Activated CD8-positive, alpha-beta T cell treated with anti-CD3 and anti-CD28 coated beads, Interleukin-2, amount 10 ng/mL, durations not matched to agents 7 days and 5 days (primary cell): ENCODE measurements at regions of chr3 and their contacts with region 1.

Region 1: GRCh38 chr3:88058591-88059368 is at the starts of genes CGGBP1 and ZNF654:
- DNase-seq: peak; percentile 99
- ATAC-seq: peak; percentile 96
- H3K4me3 Mint-ChIP-seq: peak within 1 kb of the TSS; percentile 92
- H3K27ac Mint-ChIP-seq: peak within 1 kb of the TSS; percentile 96
- H3K4me1 Mint-ChIP-seq: peaks cover 46% of the 10 kb centered on the region
- H3K27me3 Mint-ChIP-seq: no peaks in the 10 kb centered on the region
- total RNA-seq, gene CGGBP1: 85.6 to 87.6 TPM
- total RNA-seq, gene ZNF654: 21.3 to 22.3 TPM

Region 2: DNA sequence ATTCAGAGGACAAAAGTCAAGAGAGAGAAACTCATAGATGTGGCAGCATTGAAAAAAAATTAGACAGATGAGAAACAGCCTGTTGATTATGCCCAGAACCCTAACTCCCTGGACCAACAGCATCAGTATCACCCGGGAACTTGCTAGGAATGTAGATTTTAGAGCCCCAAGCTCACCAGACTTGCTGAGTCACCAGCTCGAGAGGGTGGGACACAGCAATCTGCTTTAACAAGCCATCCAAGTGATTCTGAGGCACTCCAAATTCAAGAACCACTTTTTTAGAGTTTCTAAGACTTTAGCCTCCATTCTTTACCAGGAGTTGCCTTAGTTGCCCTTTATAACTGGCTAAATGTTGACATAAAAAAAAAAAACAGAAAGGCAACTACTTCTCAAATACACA is 70.8 kb before region 1 on chr3:
- CTCF ChIA-PET with region 1: no interaction called
- POLR2A ChIA-PET with region 1: no interaction called
- DNase-seq: no peak
- ATAC-seq: no peak
- H3K4me3 Mint-ChIP-seq: no peak overlapping the region
- H3K27ac Mint-ChIP-seq: no peak overlapping the region
- H3K4me1 Mint-ChIP-seq: no peaks in the 10 kb centered on the region
- H3K27me3 Mint-ChIP-seq: peaks cover 5% of the 10 kb centered on the region

Region 3: DNA sequence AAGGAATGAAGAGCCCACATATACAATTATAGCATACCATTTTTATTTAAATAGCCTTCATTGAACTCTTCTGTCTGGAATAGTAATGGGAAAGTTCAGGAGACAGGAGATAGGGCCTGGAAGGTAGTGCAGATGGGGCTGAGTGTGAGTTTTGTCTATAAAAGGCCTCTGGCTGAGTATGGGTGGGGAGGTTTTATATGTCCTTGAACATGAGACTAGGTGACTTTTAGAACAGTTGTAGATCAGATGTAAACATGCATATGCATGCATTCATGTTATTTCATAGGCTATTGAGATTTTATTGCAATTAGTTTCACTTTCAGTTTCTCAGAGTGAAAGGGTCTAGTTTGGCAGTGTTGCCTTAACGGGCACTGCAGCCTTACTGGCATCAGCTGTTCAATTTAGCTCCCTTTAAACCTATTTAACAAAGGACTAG is 27.1 kb before region 1 on chr3:
- CTCF ChIA-PET with region 1: interaction called, 9 read pairs
- POLR2A ChIA-PET with region 1: interaction called, 28 read pairs
- DNase-seq: peak; percentile 46
- ATAC-seq: peak; percentile 93
- H3K4me3 Mint-ChIP-seq: peak overlapping the region; percentile 80
- H3K27ac Mint-ChIP-seq: peak overlapping the region; percentile 90
- H3K4me1 Mint-ChIP-seq: peaks cover 26% of the 10 kb centered on the region
- H3K27me3 Mint-ChIP-seq: no peaks in the 10 kb centered on the region

Region 4: GRCh38 chr3:88149509-88150362 is 91.0 kb after region 1 on chr3 and contains the start of gene C3orf38:
- CTCF ChIA-PET with region 1: interaction called, 5 read pairs
- POLR2A ChIA-PET with region 1: interaction called, 56 read pairs
- DNase-seq: peak; percentile 87
- ATAC-seq: peak; percentile 95
- H3K4me3 Mint-ChIP-seq: peak within 1 kb of the TSS; percentile 90
- H3K27ac Mint-ChIP-seq: peak within 1 kb of the TSS; percentile 98
- H3K4me1 Mint-ChIP-seq: peaks cover 33% of the 10 kb centered on the region
- H3K27me3 Mint-ChIP-seq: no peaks in the 10 kb centered on the region
- total RNA-seq, gene C3orf38: 28.0 to 28.8 TPM